ENCODE measurements at regions of chr12 and their contacts with region 1.

Region 1: DNA sequence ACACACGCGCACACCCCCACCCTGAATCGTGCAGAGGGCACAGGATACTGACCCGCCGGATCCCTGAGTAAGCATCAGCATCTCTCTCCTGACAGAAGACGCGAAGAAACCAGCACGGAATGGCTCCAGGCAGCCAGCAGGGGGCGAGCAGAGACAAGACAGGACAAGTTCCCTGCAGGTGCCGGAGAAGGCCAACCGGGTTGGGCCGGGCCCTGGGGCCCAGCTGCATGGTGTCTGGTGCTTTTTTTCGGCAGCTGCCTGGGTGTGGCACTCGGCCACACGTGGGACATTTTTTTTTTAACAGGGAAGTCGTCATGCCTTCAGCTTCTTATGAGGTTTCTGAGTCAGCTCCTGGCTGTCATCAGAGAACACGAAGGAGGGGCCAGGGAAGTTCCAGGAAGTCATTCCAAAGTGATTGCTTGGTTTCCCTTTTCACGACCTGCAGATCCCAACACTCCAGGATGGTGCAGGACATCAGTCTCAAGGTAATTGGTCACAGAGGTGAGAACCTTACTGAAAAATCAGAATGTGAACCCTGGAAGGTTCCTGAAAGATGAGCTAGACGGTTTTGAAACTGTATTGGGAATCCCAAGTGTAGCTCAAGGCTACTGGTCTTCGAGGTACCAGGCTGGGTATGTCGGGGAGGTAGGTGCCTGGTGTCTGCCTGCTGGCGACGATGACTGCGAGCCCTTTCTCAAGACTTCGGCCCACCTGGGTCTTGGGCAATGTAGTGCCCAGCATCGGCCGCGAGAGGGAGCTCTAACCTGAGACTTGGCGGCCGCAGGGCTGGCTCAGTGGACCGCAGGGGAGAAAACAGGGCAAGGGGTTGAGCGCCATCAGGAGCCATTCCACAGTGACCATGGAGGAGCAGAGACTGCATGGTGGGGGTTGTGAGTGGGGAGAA is 190.8 kb upstream of the PRMT8 start:
- DNase-seq: peak; percentile 68 to 84 (median 71)
- H3K4me3 ChIP-seq: peak overlapping the region in 1 of 2 donors; percentile 9
- H3K4me3 Mint-ChIP-seq: peak overlapping the region; percentile 75 to 90 (median 82)
- H3K27ac ChIP-seq: no peak overlapping the region
- H3K27ac Mint-ChIP-seq: peak overlapping the region in 6 of 7 donors; percentile 54 to 85 (median 73)
- H3K4me1 ChIP-seq: peaks cover 11% of the 10 kb centered on the region
- H3K4me1 Mint-ChIP-seq: peaks cover 10 to 14% (median 12%) of the 10 kb centered on the region in 4 donors
- H3K27me3 ChIP-seq: no peaks in the 10 kb centered on the region
- H3K27me3 Mint-ChIP-seq: peaks cover 0 to 24% of the 10 kb centered on the region in 2 donors

Region 2: DNA sequence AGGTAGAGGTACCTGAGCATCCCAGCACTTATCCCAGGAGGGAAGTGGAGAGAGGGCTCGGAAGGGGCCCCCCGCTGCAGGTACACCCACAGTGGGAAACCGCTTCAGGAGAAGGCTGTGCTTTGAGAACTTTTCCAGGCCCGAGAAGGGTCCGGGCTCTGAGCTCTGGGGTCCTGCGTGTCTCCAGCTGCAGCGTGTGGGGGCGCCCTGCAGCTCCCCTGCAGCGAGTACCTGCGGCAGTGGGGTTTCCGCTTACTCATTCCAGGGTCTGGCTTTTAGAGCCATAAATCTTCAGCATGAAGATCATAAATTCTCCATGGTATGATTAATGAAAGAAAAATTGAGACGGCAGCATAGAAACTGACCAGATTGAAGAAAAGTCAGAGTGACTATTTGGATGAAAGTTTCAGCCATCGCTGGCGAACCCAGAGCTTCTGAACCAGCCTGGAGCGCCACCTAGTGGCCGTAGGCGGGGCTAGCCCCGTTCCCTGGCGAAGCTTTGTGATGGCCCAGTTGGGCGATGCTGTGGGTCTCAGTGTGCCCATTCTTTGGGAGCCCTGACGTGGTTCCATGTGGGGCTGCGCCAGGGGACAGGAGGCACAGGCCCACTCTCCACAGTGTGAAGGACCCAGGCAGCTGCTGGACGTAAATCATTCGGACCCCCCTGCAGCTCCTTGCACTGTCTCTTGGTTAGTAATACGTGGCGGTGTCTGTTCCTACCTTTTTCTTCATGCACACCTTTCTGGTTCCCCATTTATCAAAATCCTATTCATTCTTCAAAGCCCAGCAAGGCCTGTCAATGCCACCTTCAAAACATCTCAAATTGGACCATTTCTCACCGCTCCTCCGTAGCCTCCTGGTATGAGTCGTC is 24.8 kb before region 1 on chr12:
- CTCF ChIA-PET with region 1: interaction called, 47 read pairs
- POLR2A ChIA-PET with region 1: no interaction called
- intact Hi-C with region 1: no loop called
- DNase-seq: peak in 4 of 5 donors; percentile 46 to 58 (median 52)
- H3K4me3 ChIP-seq: no peak overlapping the region
- H3K4me3 Mint-ChIP-seq: peak overlapping the region in 2 of 8 donors; percentile 25 to 46
- H3K27ac ChIP-seq: no peak overlapping the region
- H3K27ac Mint-ChIP-seq: no peak overlapping the region
- H3K4me1 ChIP-seq: no peaks in the 10 kb centered on the region
- H3K4me1 Mint-ChIP-seq: no peaks in the 10 kb centered on the region
- H3K27me3 ChIP-seq: no peaks in the 10 kb centered on the region
- H3K27me3 Mint-ChIP-seq: peaks cover 8 to 20% of the 10 kb centered on the region in 2 donors

Region 3: DNA sequence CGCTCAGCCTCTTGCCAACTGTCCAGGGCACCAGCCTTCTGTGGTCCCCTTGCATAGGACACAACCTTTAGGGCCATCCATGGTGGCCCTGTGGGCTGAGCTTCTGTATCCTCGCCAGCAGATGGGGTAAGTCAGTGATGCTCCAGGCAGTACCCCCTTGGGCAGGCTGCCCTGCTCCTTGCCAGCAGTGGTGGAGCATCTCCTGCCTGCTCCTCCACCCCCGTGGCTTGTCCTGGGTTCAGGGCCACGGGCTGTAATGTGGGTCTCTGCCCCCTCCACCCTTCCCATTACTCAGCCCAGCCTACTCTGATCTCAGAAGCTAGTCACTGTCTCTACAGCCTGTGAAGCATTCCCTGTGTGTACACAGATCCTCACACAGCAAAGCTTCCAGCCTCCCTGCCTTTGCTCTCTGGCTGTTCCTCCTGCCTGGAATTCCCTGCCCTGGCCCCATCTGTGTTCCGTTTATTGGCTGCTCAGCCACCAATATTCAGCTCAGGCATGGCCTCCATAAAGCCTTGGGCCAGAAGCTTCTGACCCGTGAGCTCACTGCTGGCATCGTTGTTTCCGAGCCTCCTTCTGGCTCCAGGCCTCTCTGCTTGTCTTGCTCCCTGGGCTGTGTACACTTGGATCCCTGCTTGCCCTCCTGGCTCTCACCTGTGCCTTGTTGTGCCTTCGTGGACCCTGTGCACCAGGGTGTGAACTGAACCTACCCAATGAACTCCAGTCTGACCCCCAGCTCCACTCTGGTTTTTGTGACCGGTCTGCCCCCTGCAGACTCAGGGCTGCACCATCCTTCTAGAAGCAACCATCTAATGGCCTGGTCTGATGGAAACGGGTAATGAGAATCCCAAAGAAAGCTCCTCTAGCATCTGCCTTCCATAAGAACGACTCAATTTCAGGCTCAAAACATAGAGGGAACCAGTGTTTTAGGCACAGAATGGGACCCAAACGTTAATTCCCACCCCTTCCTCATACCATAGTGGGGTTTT is 13.8 kb after region 1 on chr12:
- CTCF ChIA-PET with region 1: interaction called, 87 read pairs
- POLR2A ChIA-PET with region 1: no interaction called
- intact Hi-C with region 1: no loop called
- DNase-seq: peak in 4 of 5 donors; percentile 4 to 13 (median 7)
- H3K4me3 ChIP-seq: no peak overlapping the region
- H3K4me3 Mint-ChIP-seq: no peak overlapping the region
- H3K27ac ChIP-seq: no peak overlapping the region
- H3K27ac Mint-ChIP-seq: peak overlapping the region in 1 of 7 donors; percentile 71
- H3K4me1 ChIP-seq: no peaks in the 10 kb centered on the region
- H3K4me1 Mint-ChIP-seq: no peaks in the 10 kb centered on the region
- H3K27me3 ChIP-seq: no peaks in the 10 kb centered on the region
- H3K27me3 Mint-ChIP-seq: peaks cover 9 to 17% of the 10 kb centered on the region in 2 donors

Region 4: DNA sequence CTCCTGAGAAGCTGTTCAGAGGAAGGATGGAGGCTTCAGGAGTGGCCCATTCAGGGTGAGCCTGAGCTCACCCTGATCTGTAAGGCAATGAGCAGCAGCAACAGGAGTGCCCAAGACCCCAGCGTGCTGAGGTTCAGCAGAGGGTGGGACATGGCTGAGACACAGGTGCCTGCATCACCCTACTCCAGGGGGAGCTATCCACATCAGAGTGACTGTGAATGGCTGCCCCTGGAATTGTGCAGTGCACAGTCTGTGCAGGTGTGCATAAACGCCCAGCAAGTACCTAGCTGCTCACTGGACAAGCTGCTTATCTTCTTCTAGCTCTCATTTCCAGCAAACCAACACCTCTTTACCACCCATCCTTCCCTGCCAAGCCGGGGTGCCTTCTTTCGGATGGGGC is 50.2 kb after region 1 on chr12:
- CTCF ChIA-PET with region 1: interaction called, 15 read pairs
- POLR2A ChIA-PET with region 1: no interaction called
- intact Hi-C with region 1: no loop called
- DNase-seq: no peak
- H3K4me3 ChIP-seq: no peak overlapping the region
- H3K4me3 Mint-ChIP-seq: no peak overlapping the region
- H3K27ac ChIP-seq: no peak overlapping the region
- H3K27ac Mint-ChIP-seq: no peak overlapping the region
- H3K4me1 ChIP-seq: no peaks in the 10 kb centered on the region
- H3K4me1 Mint-ChIP-seq: no peaks in the 10 kb centered on the region
- H3K27me3 ChIP-seq: peaks cover 6% of the 10 kb centered on the region
- H3K27me3 Mint-ChIP-seq: peaks cover 9 to 11% of the 10 kb centered on the region in 2 donors

Region 5: DNA sequence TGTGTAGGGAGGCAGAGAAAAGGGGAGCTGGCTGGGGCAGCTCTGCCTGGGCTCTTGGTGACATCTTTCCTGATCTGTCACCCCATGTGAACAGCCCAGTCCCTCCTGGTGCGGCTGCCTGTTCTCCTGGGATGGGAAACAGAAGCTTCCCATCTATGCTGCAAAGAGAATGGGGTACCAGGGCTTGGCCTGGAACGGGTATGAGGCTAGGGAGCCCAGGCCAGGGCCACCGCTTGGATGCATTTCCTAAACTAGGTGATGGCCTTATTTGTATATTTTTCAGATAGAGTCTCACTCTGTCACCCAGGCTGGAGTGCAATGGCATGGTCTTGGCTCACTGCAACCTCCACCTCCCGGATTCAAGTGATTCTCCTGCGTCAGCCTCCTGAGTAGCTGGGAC is 142.2 kb after region 1 on chr12:
- CTCF ChIA-PET with region 1: no interaction called
- POLR2A ChIA-PET with region 1: no interaction called
- intact Hi-C with region 1: no loop called
- DNase-seq: no peak
- H3K4me3 ChIP-seq: no peak overlapping the region
- H3K4me3 Mint-ChIP-seq: no peak overlapping the region
- H3K27ac ChIP-seq: no peak overlapping the region
- H3K27ac Mint-ChIP-seq: no peak overlapping the region
- H3K4me1 ChIP-seq: no peaks in the 10 kb centered on the region
- H3K4me1 Mint-ChIP-seq: no peaks in the 10 kb centered on the region
- H3K27me3 ChIP-seq: no peaks in the 10 kb centered on the region
- H3K27me3 Mint-ChIP-seq: peaks cover 8 to 10% of the 10 kb centered on the region in 2 donors

Region 6: DNA sequence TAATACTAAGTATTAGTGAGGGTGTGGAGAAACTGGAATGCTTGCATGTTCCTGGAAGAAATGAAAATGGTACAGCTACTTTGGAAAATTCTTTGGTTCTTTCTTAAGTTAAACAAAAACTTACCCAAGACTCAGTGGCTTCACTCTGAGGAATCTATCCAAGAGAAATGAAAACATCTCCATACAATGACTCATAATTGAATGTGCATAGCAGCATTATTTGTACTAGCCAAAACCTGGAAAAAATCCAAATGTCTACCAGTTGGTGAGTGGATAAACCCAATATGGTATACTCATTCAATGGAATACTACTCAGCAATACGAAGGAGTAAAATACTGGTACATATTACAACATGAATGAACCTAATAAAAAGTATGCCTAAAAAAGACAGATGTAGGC is 470.7 kb after region 1 on chr12:
- CTCF ChIA-PET with region 1: interaction called, 47 read pairs
- POLR2A ChIA-PET with region 1: no interaction called
- intact Hi-C with region 1: no loop called
- DNase-seq: no peak
- H3K4me3 ChIP-seq: no peak overlapping the region
- H3K4me3 Mint-ChIP-seq: no peak overlapping the region
- H3K27ac ChIP-seq: no peak overlapping the region
- H3K27ac Mint-ChIP-seq: no peak overlapping the region
- H3K4me1 ChIP-seq: peaks cover 11% of the 10 kb centered on the region
- H3K4me1 Mint-ChIP-seq: peaks cover 8 to 17% (median 9%) of the 10 kb centered on the region in 4 donors
- H3K27me3 ChIP-seq: no peaks in the 10 kb centered on the region
- H3K27me3 Mint-ChIP-seq: no peaks in the 10 kb centered on the region

Region 7: GRCh38 chr12:3791256-3792252 is 491.4 kb after region 1 on chr12:
- CTCF ChIA-PET with region 1: interaction called, 15 read pairs
- POLR2A ChIA-PET with region 1: no interaction called
- intact Hi-C with region 1: no loop called
- DNase-seq: no peak
- H3K4me3 ChIP-seq: no peak overlapping the region
- H3K4me3 Mint-ChIP-seq: no peak overlapping the region
- H3K27ac ChIP-seq: no peak overlapping the region
- H3K27ac Mint-ChIP-seq: peak overlapping the region in 2 of 7 donors; percentile 14 to 45
- H3K4me1 ChIP-seq: no peaks in the 10 kb centered on the region
- H3K4me1 Mint-ChIP-seq: no peaks in the 10 kb centered on the region
- H3K27me3 ChIP-seq: no peaks in the 10 kb centered on the region
- H3K27me3 Mint-ChIP-seq: no peaks in the 10 kb centered on the region

Region 8: DNA sequence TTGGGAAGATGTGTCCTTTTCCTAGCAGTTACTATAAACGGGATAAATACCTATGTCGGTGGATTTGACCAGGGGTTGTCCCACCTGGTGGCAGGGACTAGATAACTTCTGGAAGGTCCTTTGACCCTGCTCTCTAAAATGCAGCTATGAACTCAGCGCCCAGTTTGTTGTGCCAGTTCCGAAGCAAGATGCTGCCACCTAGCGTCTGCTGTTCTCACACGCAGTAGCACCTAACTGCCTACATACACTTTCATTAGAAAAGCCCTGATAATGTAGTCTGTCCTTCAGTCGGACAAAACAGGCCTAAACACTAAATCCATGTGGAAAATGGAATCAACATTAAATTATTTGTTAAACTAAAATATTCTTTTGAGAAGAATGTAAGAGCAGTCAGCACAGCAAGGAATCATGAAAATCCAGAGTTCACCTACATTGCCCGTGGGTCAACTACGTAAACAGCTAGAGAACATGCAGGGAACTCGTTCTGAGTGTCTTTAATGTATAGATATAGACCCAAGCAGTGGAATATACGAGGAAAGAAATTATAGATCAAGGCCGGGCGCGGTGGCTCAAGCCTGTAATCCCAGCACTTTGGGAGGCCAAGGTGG is 503.8 kb after region 1 on chr12:
- CTCF ChIA-PET with region 1: interaction called, 222 read pairs
- POLR2A ChIA-PET with region 1: interaction called, 3 read pairs
- intact Hi-C with region 1: no loop called
- DNase-seq: peak; percentile 54 to 60 (median 59)
- H3K4me3 ChIP-seq: no peak overlapping the region
- H3K4me3 Mint-ChIP-seq: no peak overlapping the region
- H3K27ac ChIP-seq: no peak overlapping the region
- H3K27ac Mint-ChIP-seq: peak overlapping the region in 1 of 7 donors; percentile 9
- H3K4me1 ChIP-seq: no peaks in the 10 kb centered on the region
- H3K4me1 Mint-ChIP-seq: peaks cover 0 to 3% (median 2%) of the 10 kb centered on the region in 4 donors
- H3K27me3 ChIP-seq: no peaks in the 10 kb centered on the region
- H3K27me3 Mint-ChIP-seq: no peaks in the 10 kb centered on the region